CD8-positive, alpha-beta T cell (primary cell): ENCODE measurements at regions of chr19 and their contacts with region 1.

Region 1: DNA sequence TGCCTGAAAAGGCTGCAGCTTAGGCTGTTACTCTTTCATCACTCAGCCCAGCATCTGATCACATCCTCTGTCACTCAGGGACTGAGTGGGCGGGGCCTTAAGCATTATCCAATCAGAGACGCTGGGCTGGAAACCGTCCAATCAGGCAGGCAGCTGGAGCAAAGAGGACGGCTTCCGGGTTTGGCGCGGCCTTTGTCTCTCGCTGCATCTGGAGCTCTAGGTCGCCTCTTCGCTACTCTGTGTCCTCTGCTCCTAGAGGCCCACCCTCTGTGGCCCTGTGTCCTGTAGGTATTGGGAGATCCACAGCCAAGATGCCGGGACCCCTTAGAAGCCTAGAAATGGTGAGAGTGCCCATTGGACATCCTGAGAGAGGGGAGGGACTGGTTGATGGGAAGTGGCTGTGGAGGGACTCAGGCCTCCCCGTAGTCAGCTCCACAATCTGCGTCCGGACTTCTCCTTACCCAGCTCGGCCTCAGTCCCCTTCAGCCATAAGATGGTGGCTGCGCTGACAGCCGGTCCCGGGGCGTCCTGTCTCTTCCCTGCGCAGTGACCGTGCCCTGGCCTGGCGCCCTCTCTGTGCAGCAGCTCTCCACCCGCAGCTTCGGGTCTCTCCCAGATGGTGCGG is at the start of gene ZNF486:
- DNase-seq: peak; percentile 83 to 97 (median 92)
- ATAC-seq: peak; percentile 97
- H3K4me3 ChIP-seq: peak within 1 kb of the TSS; percentile 74 to 95
- H3K4me3 Mint-ChIP-seq: peak within 1 kb of the TSS; percentile 97
- H3K27ac ChIP-seq: peak within 1 kb of the TSS; percentile 54 to 80
- H3K27ac Mint-ChIP-seq: peak within 1 kb of the TSS; percentile 92
- H3K4me1 ChIP-seq: peaks cover 13% of the 10 kb centered on the region
- H3K4me1 Mint-ChIP-seq: peaks cover 57% of the 10 kb centered on the region
- H3K27me3 ChIP-seq: no peaks in the 10 kb centered on the region
- H3K27me3 Mint-ChIP-seq: no peaks in the 10 kb centered on the region
- CTCF ChIP-seq: no peak
- total RNA-seq, gene ZNF486: 3.7 to 4.7 TPM

Region 2: GRCh38 chr19:19540715-19541440 is 626.3 kb before region 1 on chr19:
- CTCF ChIA-PET with region 1: no interaction called
- POLR2A ChIA-PET with region 1: no interaction called
- intact Hi-C with region 1: loop called in 1 of 2 experiments (anchors 5 kb)
- DNase-seq: peak; percentile 46 to 82 (median 76)
- ATAC-seq: peak; percentile 76
- H3K4me3 ChIP-seq: peak overlapping the region; percentile 32 to 58
- H3K4me3 Mint-ChIP-seq: peak overlapping the region; percentile 69
- H3K27ac ChIP-seq: no peak overlapping the region
- H3K27ac Mint-ChIP-seq: peak overlapping the region; percentile 18
- H3K4me1 ChIP-seq: peaks cover 39% of the 10 kb centered on the region
- H3K4me1 Mint-ChIP-seq: peaks cover 27% of the 10 kb centered on the region
- H3K27me3 ChIP-seq: peaks cover 0 to 2% of the 10 kb centered on the region in 2 experiments
- H3K27me3 Mint-ChIP-seq: no peaks in the 10 kb centered on the region
- CTCF ChIP-seq: no peak

Region 3: DNA sequence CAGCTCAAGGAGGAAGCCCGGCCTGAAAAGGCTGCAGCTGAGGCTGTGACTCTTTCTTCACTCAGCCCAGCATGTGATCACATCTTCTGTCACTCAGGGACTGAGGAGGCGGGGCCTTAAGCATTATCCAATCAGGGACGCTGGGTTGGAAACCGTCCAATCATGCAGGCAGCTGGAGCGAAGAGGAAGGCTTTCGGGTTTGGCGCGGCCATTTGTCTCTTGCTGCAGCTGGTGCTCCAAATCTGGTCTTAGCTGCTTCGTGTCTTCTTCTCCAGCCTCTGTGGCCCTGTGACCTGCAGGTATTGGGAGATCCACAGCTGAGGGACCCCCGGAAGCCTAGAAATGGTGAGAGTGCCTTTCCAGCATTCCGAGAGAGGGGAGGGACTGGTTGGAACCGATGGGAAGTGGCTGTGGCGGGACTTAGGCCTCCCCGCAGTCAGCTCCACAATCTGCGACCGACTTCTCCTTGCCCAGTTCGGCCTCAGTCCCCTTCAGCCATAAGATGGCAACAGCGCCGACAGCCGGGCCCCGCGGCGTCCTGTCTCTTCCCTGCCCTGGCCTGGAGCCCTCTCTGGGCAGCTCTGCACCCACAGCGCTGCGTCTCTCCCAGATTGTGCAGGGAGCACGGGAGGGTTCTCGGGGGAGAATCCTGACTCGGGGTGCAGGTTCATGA is 89.2 kb before region 1 on chr19 and contains the start of gene ZNF90:
- CTCF ChIA-PET with region 1: no interaction called
- POLR2A ChIA-PET with region 1: interaction called, 7 read pairs
- intact Hi-C with region 1: loop called (anchors 1 to 5 kb)
- DNase-seq: peak; percentile 63 to 95 (median 84)
- ATAC-seq: peak; percentile 99
- H3K4me3 ChIP-seq: peak within 1 kb of the TSS; percentile 67 to 76
- H3K4me3 Mint-ChIP-seq: peak within 1 kb of the TSS; percentile 91
- H3K27ac ChIP-seq: no peak within 1 kb of the TSS
- H3K27ac Mint-ChIP-seq: no peak within 1 kb of the TSS
- H3K4me1 ChIP-seq: peaks cover 10% of the 10 kb centered on the region
- H3K4me1 Mint-ChIP-seq: peaks cover 22% of the 10 kb centered on the region
- H3K27me3 ChIP-seq: no peaks in the 10 kb centered on the region
- H3K27me3 Mint-ChIP-seq: no peaks in the 10 kb centered on the region
- CTCF ChIP-seq: no peak
- total RNA-seq, gene ZNF90: 1.9 to 2.2 TPM

Region 4: DNA sequence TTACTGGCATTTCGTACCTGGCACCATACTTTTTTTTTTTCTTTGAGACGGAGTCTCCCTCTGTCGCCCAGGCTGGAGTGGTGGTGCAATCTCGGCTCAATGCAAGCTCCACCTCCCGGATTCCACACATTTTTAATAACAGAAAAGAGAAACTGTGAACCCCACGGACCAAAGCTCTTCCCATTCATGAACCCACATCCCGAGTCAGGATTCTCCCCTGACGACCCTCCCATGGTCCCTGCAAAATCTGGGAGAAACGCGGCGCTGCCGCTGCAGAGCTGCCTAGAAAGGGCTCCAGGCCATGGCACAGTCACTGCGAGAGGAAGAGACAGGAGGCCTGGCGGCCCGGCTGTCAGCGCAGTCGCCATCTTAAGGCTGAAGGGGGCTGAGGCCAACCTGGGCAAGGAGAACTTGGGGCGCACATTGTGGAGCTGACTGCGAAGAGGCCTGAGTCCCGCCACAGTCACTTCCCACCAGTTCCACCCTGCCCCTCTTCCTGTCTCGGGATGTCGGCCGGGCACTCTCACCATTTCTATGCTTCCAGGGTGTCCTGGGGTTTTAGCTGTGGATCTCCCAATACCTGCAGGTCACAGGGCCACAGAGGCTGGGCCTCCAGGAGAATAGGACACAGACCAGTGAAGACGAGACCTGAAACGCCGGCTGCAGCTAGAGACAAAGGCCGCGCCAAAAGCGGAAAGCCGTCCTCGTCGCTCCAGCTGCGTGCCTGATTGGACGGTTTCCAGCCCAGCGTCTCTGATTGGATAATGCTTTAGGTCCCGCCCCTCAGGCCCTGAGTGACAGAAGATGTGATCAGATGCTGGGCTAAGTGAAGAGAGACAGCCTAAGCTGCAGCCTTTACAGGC is 70.9 kb after region 1 on chr19:
- CTCF ChIA-PET with region 1: no interaction called
- POLR2A ChIA-PET with region 1: no interaction called
- intact Hi-C with region 1: loop called (anchors 1 to 5 kb)
- DNase-seq: peak; percentile 74 to 92 (median 86)
- ATAC-seq: peak; percentile 97
- H3K4me3 ChIP-seq: peak overlapping the region; percentile 77 to 87
- H3K4me3 Mint-ChIP-seq: peak overlapping the region; percentile 98
- H3K27ac ChIP-seq: peak overlapping the region; percentile 50 to 56
- H3K27ac Mint-ChIP-seq: peak overlapping the region; percentile 91
- H3K4me1 ChIP-seq: peaks cover 6% of the 10 kb centered on the region
- H3K4me1 Mint-ChIP-seq: peaks cover 10% of the 10 kb centered on the region
- H3K27me3 ChIP-seq: no peaks in the 10 kb centered on the region
- H3K27me3 Mint-ChIP-seq: no peaks in the 10 kb centered on the region
- CTCF ChIP-seq: no peak

Region 5: DNA sequence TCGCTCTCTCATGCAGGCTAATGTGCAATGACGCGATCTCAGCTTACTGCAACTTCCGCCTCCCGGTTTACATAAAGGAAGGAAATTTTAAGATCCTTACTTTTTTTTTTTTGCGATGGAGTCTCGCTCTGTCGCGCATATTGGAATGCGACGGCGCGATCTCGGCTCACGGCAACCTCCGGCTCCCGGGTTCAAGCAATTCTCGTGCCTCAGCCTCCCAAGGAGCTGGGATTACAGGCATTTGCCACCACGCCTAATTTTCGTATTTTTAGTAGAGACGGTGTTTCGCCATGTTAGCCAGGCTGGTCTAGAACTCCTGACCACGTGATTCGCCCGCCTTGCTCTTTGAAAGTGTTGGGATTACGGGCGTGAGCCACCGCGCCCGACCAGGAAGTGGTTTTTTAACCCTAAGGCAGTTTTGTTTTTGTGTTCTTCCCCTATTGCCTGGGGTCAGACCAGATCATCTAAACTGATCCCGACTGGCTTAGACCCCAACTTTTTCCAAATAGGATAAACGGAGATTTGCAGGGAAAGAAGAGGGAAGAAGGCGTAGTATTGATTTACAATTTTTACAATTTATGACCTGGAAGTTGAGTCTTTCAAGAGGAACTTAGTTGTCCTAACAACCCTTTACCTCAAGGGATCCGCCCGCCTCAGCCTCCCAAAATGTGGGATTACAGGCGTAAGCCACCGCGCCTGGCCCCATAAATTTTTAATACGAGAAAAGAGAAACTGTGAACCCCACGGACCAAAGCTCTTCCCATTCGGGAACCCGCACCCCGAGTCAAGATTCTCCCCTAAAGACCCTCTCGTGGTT is 256.5 kb after region 1 on chr19:
- CTCF ChIA-PET with region 1: no interaction called
- POLR2A ChIA-PET with region 1: no interaction called
- intact Hi-C with region 1: loop called in 1 of 2 experiments (anchors 10 kb)
- DNase-seq: peak in 7 of 9 experiments; percentile 4 to 62 (median 28)
- ATAC-seq: no peak
- H3K4me3 ChIP-seq: peak overlapping the region; percentile 52 to 88
- H3K4me3 Mint-ChIP-seq: peak overlapping the region; percentile 97
- H3K27ac ChIP-seq: peak overlapping the region; percentile 11 to 53
- H3K27ac Mint-ChIP-seq: peak overlapping the region; percentile 93
- H3K4me1 ChIP-seq: no peaks in the 10 kb centered on the region
- H3K4me1 Mint-ChIP-seq: peaks cover 8% of the 10 kb centered on the region
- H3K27me3 ChIP-seq: no peaks in the 10 kb centered on the region
- H3K27me3 Mint-ChIP-seq: no peaks in the 10 kb centered on the region
- CTCF ChIP-seq: no peak